HepG2 (cell line): ENCODE measurements at regions of chr20 and their contacts with region 1.

Region 1: DNA sequence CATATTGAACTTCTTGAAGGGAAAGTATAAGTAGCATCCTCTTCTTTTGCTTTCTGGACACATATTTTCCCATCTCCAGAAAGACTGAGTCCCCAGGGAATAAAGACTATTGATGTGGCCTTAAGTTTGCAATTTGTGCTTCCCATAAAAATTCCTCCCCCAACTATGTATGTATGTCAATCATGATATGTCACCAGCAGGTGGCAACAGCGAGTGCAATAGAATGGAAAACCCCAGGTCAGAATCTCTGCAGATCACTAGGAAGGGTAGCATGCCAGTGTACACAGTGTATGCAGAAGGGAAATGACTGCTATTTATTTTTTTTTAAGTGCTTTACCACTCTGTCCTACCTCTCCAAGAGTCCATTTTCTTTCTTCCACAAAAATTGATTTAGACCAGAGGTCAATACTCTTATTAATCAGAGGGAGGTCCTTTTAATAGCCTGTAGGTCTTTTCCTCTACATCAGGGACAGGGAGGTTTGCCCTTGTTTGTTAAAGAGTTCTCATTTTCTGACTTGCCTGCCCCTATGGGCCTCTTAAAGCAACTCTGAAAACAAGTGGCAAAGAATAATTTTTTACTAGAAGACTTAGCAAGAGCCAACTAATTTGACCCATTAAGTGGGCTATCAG is 61.4 kb downstream of the BMP2 start:
- DNase-seq: peak; percentile 74
- ATAC-seq: peak; percentile 99
- H3K4me3 ChIP-seq: no peak overlapping the region
- H3K27ac ChIP-seq: no peak overlapping the region
- H3K4me1 ChIP-seq: no peaks in the 10 kb centered on the region
- H3K27me3 ChIP-seq: no peaks in the 10 kb centered on the region
- CTCF ChIP-seq: peak; percentile 81
- EP300 ChIP-seq: no peak; a peak in 1 of 4 replicates
- POLR2A ChIP-seq: no peak
- RAD21 ChIP-seq: peak; percentile 61

Region 2: GRCh38 chr20:6583134-6583738 is 245.7 kb before region 1 on chr20:
- CTCF ChIA-PET with region 1: no interaction called
- POLR2A ChIA-PET with region 1: no interaction called
- in situ Hi-C with region 1: no loop called
- intact Hi-C with region 1: loop called (anchors 1 kb)
- DNase-seq: peak; percentile 61
- ATAC-seq: peak; percentile 97
- H3K4me3 ChIP-seq: no peak overlapping the region
- H3K27ac ChIP-seq: no peak overlapping the region
- H3K4me1 ChIP-seq: no peaks in the 10 kb centered on the region
- H3K27me3 ChIP-seq: no peaks in the 10 kb centered on the region
- CTCF ChIP-seq: peak; percentile 89
- EP300 ChIP-seq: no peak
- POLR2A ChIP-seq: no peak
- RAD21 ChIP-seq: no peak; the same call in 1 of the 2 replicates

Region 3: GRCh38 chr20:7161690-7162089 is 332.8 kb after region 1 on chr20:
- CTCF ChIA-PET with region 1: no interaction called
- POLR2A ChIA-PET with region 1: no interaction called
- in situ Hi-C with region 1: no loop called
- intact Hi-C with region 1: loop called (anchors 2 kb)
- DNase-seq: peak; percentile 38
- ATAC-seq: peak; percentile 75
- H3K4me3 ChIP-seq: no peak overlapping the region
- H3K27ac ChIP-seq: no peak overlapping the region
- H3K4me1 ChIP-seq: no peaks in the 10 kb centered on the region
- H3K27me3 ChIP-seq: no peaks in the 10 kb centered on the region
- CTCF ChIP-seq: peak; percentile 59
- EP300 ChIP-seq: no peak
- POLR2A ChIP-seq: no peak
- RAD21 ChIP-seq: no peak

Region 4: DNA sequence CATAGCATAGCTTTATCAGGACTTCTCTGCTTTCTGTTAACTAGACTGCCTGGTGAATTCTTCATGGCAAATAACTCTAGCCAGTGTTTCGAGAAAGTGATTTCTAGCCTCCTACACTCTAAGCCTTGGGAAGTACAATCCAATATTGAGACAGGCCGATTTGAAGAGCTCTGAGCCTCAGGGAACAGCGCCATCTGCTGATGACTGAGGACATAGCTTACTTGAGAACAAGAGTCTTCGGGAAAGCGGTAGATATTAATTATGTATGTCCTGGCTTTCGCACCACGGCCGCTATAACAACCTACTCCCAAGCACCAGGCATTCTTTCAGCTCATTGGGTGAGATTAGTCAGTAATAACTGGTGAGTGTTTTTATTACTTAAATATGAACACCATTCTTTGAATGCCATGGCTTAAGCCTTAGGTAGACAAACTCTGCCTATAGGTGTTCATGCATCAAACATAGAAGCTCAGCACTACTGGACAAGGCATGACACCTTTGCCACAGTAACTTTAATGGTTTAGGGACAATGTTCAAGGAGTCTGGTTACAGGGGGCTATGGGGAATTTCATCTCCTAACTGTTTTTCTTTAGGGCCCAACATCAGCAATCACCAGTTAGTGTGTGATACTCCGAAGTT is 457.1 kb after region 1 on chr20:
- CTCF ChIA-PET with region 1: no interaction called
- POLR2A ChIA-PET with region 1: no interaction called
- in situ Hi-C with region 1: no loop called
- intact Hi-C with region 1: loop called (anchors 1 kb)
- DNase-seq: peak; percentile 80
- ATAC-seq: peak; percentile 98
- H3K4me3 ChIP-seq: no peak overlapping the region
- H3K27ac ChIP-seq: no peak overlapping the region
- H3K4me1 ChIP-seq: no peaks in the 10 kb centered on the region
- H3K27me3 ChIP-seq: no peaks in the 10 kb centered on the region
- CTCF ChIP-seq: peak; percentile 94
- EP300 ChIP-seq: no peak
- POLR2A ChIP-seq: no peak
- RAD21 ChIP-seq: peak; percentile 78

Region 5: DNA sequence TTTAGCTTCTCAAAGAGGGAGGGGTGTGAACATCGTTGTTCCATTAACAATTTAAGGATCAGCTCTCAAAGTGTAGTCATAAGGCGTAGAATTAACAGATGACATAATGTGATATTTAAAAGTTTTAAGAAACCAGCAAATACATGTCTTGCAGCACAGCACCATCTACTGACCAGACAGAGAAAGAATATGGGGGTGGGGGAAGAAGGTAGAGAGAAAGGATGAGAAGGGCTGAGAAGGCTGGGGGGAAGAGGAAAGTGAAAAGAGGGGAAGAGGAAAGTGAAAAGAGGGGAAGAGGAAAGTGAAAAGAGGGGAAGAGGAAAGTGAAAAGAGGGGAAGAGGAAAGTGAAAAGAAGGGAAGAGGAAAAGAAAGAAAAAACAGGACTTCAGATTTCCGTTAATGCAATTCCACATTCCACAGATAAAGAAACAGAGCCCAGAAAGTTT is 1030.5 kb after region 1 on chr20:
- CTCF ChIA-PET with region 1: interaction called, 16 read pairs
- POLR2A ChIA-PET with region 1: no interaction called
- in situ Hi-C with region 1: loop called (anchors 10 kb)
- intact Hi-C with region 1: no loop called
- DNase-seq: peak; percentile 47
- ATAC-seq: peak; percentile 79
- H3K4me3 ChIP-seq: no peak overlapping the region
- H3K27ac ChIP-seq: no peak overlapping the region
- H3K4me1 ChIP-seq: no peaks in the 10 kb centered on the region
- H3K27me3 ChIP-seq: no peaks in the 10 kb centered on the region
- CTCF ChIP-seq: peak; percentile 86
- EP300 ChIP-seq: no peak
- POLR2A ChIP-seq: no peak
- RAD21 ChIP-seq: peak; percentile 67